A673 (cell line): ENCODE measurements at regions of chr2 and their contacts with region 1.

Region 1: GRCh38 chr2:196696423-196697079 is 57.0 kb downstream of the CCDC150 start:
- DNase-seq: peak; percentile 7
- H3K4me3 ChIP-seq: no peak overlapping the region
- H3K27ac ChIP-seq: no peak overlapping the region
- H3K4me1 ChIP-seq: no peaks in the 10 kb centered on the region
- H3K27me3 ChIP-seq: no peaks in the 10 kb centered on the region
- CTCF ChIP-seq: no peak

Region 2: GRCh38 chr2:196875414-196875813 is 178.9 kb after region 1 on chr2:
- CTCF ChIA-PET with region 1: no interaction called
- POLR2A ChIA-PET with region 1: interaction called, 10 read pairs
- intact Hi-C with region 1: no loop called
- DNase-seq: no peak
- H3K4me3 ChIP-seq: no peak overlapping the region
- H3K27ac ChIP-seq: no peak overlapping the region
- H3K4me1 ChIP-seq: no peaks in the 10 kb centered on the region
- H3K27me3 ChIP-seq: no peaks in the 10 kb centered on the region
- CTCF ChIP-seq: no peak